ENCODE measurements at regions of chr17 and their contacts with region 1.

Region 1: GRCh38 chr17:80035943-80036714 is at the start of gene CCDC40:
- DNase-seq: peak; percentile 66 to 85 (median 78)
- ATAC-seq: peak; percentile 91
- H3K4me3 ChIP-seq: peak within 1 kb of the TSS; percentile 81
- H3K4me3 Mint-ChIP-seq: peak within 1 kb of the TSS; percentile 78 to 94 (median 85)
- H3K27ac ChIP-seq: peak within 1 kb of the TSS; percentile 76
- H3K27ac Mint-ChIP-seq: peak within 1 kb of the TSS; percentile 60 to 96 (median 84)
- H3K4me1 ChIP-seq: peaks cover 4 to 6% of the 10 kb centered on the region in 2 donors
- H3K4me1 Mint-ChIP-seq: peaks cover 5 to 18% (median 9%) of the 10 kb centered on the region in 7 donors
- H3K27me3 ChIP-seq: peaks cover 0 to 3% of the 10 kb centered on the region in 2 donors
- H3K27me3 Mint-ChIP-seq: peaks cover 0 to 63% (median 10%) of the 10 kb centered on the region in 5 donors
- total RNA-seq, gene CCDC40: 0.43 to 3.0 (median 0.79) TPM

Region 2: GRCh38 chr17:79796763-79797491 is 239.2 kb before region 1 on chr17 and contains the start of gene CBX8:
- CTCF ChIA-PET with region 1: no interaction called
- POLR2A ChIA-PET with region 1: no interaction called
- intact Hi-C with region 1: loop called in 1 of 2 experiments (anchors 5 kb)
- DNase-seq: peak; percentile 97 to 99 (median 98)
- ATAC-seq: peak; percentile 95
- H3K4me3 ChIP-seq: peak within 1 kb of the TSS; percentile 54
- H3K4me3 Mint-ChIP-seq: peak within 1 kb of the TSS; percentile 84 to 92 (median 87)
- H3K27ac ChIP-seq: peak within 1 kb of the TSS; percentile 77
- H3K27ac Mint-ChIP-seq: peak within 1 kb of the TSS in 8 of 9 donors; percentile 75 to 95 (median 90)
- H3K4me1 ChIP-seq: peaks cover 31 to 39% of the 10 kb centered on the region in 2 donors
- H3K4me1 Mint-ChIP-seq: peaks cover 17 to 54% (median 34%) of the 10 kb centered on the region in 7 donors
- H3K27me3 ChIP-seq: peaks cover 29 to 32% of the 10 kb centered on the region in 2 donors
- H3K27me3 Mint-ChIP-seq: peaks cover 24 to 51% (median 34%) of the 10 kb centered on the region in 5 donors
- total RNA-seq, gene CBX8: 2.4 to 11.9 (median 3.0) TPM

Region 3: DNA sequence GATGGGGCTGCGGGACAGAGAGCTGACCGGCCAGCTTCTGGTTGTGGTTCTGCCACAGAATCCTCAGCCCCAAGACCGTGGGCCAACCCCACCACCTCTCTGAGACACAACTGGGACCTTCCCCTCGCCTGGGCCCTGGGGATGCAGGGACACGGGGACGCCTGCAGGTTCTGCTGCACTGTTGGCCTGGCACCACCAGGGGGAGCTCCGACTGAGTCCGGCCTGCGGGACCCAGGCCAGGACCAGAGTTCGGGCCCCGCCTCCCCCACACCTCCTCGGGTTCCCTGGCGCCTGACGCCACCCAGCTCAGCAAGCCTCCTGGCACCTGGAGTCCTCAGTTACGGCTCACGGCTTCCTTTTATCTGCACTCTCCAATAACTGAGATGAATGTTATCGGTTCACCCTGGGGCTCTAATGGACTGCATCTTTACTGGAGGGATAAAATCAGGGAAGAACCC is 27.7 kb before region 1 on chr17:
- CTCF ChIA-PET with region 1: interaction called, 4 read pairs
- POLR2A ChIA-PET with region 1: interaction called, 4 read pairs
- intact Hi-C with region 1: loop called in 1 of 2 experiments (anchors 2 kb)
- DNase-seq: peak; percentile 30 to 82 (median 63)
- ATAC-seq: peak; percentile 89
- H3K4me3 ChIP-seq: no peak overlapping the region
- H3K4me3 Mint-ChIP-seq: no peak overlapping the region
- H3K27ac ChIP-seq: no peak overlapping the region
- H3K27ac Mint-ChIP-seq: peak overlapping the region in 1 of 9 donors; percentile 20
- H3K4me1 ChIP-seq: peaks cover 0 to 3% of the 10 kb centered on the region in 2 donors
- H3K4me1 Mint-ChIP-seq: peaks cover 5 to 13% (median 8%) of the 10 kb centered on the region in 7 donors
- H3K27me3 ChIP-seq: no peaks in the 10 kb centered on the region
- H3K27me3 Mint-ChIP-seq: no peaks in the 10 kb centered on the region

Region 4: DNA sequence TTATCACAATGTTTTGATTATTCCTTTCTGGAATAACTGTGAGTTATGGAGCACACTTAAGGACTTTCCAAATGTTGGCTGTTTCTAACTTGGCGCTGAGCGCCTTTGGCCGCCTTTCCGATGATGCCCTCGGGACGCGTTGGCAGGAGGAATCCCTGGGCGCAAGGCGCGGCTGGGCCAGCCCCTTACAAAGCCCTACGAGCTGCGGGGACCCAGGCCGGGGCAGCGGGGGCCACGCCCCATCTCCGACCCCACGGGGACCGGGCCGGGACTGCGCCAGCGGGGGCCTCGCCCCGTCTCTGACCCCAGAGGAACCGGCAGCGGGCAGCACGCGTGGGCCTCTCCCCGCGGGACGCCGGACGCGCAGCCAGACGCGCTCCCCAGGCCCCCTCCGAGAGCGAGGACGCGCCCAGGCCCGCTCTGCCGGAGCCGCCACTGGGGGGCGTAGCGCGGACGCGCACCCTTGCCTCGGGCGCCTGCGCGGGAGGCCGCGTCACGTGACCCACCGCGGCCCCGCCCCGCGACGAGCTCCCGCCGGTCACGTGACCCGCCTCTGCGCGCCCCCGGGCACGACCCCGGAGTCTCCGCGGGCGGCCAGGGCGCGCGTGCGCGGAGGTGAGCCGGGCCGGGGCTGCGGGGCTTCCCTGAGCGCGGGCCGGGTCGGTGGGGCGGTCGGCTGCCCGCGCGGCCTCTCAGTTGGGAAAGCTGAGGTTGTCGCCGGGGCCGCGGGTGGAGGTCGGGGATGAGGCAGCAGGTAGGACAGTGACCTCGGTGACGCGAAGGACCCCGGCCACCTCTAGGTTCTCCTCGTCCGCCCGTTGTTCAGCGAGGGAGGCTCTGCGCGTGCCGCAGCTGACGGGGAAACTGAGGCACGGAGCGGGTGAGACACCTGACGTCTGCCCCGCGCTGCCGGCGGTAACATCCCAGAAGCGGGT is 65.1 kb after region 1 on chr17 and contains the start of gene GAA:
- CTCF ChIA-PET with region 1: no interaction called
- POLR2A ChIA-PET with region 1: no interaction called
- intact Hi-C with region 1: loop called in 1 of 2 experiments (anchors 1 kb)
- DNase-seq: peak; percentile 84 to 97 (median 91)
- ATAC-seq: peak; percentile 97
- H3K4me3 ChIP-seq: peak within 1 kb of the TSS; percentile 79
- H3K4me3 Mint-ChIP-seq: peak within 1 kb of the TSS; percentile 85 to 93 (median 90)
- H3K27ac ChIP-seq: peak within 1 kb of the TSS; percentile 86
- H3K27ac Mint-ChIP-seq: peak within 1 kb of the TSS; percentile 81 to 93 (median 86)
- H3K4me1 ChIP-seq: peaks cover 10 to 16% of the 10 kb centered on the region in 2 donors
- H3K4me1 Mint-ChIP-seq: peaks cover 20 to 30% (median 27%) of the 10 kb centered on the region in 7 donors
- H3K27me3 ChIP-seq: no peaks in the 10 kb centered on the region
- H3K27me3 Mint-ChIP-seq: peaks cover 0 to 10% (median 0%) of the 10 kb centered on the region in 5 donors
- total RNA-seq, gene GAA: 18.5 to 67.8 (median 54.6) TPM

Region 5: DNA sequence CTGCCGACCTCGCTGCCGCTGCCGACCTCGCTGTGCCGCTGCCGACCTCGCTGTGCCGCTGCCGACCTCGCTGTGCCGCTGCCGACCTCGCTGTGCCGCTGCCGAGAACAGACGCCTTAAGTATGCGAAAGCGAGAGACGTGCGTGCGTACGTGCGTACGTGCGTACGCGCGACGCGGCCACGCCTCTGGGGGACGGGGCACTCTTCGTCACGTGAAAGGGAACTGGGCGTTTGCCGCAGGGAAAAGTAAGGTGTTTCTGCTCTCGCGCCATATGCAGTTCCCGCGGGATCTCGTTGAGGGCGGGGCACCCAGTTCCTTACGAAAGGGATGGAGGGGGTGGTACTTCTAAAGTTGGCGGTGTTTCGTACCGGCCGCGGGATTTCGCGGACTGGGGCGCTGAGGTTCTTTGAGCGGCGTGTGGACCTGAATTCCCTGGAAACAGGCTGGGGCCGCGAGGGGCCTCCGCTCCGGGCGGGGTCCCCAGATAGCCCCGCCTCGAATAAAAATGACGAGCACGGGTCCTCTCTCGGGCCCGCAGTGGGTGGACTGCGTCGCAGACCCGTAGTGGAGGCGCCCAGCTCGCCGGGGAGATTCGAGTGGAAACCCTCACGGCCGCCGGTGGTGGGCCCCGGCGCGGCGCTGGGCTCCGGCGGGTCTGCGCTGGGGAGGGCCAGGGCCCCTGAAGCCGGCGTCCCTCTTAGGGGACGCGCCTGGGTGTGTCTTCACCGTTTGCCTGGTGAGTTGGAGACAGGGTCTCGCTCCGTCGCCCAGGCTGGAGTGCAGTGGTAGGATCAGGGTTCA is 111.1 kb after region 1 on chr17 and contains the start of gene EIF4A3:
- CTCF ChIA-PET with region 1: no interaction called
- POLR2A ChIA-PET with region 1: interaction called, 3 read pairs
- intact Hi-C with region 1: loop called in 1 of 2 experiments (anchors 5 kb)
- DNase-seq: peak; percentile 84 to 98 (median 96)
- ATAC-seq: peak; percentile 97
- H3K4me3 ChIP-seq: peak within 1 kb of the TSS; percentile 64
- H3K4me3 Mint-ChIP-seq: peak within 1 kb of the TSS; percentile 81 to 100 (median 98)
- H3K27ac ChIP-seq: peak within 1 kb of the TSS; percentile 91
- H3K27ac Mint-ChIP-seq: peak within 1 kb of the TSS; percentile 68 to 100 (median 97)
- H3K4me1 ChIP-seq: peaks cover 19 to 21% of the 10 kb centered on the region in 2 donors
- H3K4me1 Mint-ChIP-seq: peaks cover 15 to 59% (median 44%) of the 10 kb centered on the region in 7 donors
- H3K27me3 ChIP-seq: no peaks in the 10 kb centered on the region
- H3K27me3 Mint-ChIP-seq: no peaks in the 10 kb centered on the region
- total RNA-seq, gene EIF4A3: 48.6 to 128 (median 75.9) TPM